Thyroid gland (tissue), 4 donors: ENCODE measurements at regions of chr21 and their contacts with region 1.

Region 1: GRCh38 chr21:26715878-26716506 is 129.2 kb downstream of the ADAMTS1 start:
- DNase-seq: peak; percentile 11 to 31
- H3K4me3 ChIP-seq: no peak overlapping the region
- H3K27ac ChIP-seq: no peak overlapping the region
- H3K4me1 ChIP-seq: no peaks in the 10 kb centered on the region
- H3K27me3 ChIP-seq: no peaks in the 10 kb centered on the region
- CTCF ChIP-seq: peak in 3 of 6 experiments; percentile 15 to 70 (median 41)
- POLR2A ChIP-seq: no peak

Region 2: DNA sequence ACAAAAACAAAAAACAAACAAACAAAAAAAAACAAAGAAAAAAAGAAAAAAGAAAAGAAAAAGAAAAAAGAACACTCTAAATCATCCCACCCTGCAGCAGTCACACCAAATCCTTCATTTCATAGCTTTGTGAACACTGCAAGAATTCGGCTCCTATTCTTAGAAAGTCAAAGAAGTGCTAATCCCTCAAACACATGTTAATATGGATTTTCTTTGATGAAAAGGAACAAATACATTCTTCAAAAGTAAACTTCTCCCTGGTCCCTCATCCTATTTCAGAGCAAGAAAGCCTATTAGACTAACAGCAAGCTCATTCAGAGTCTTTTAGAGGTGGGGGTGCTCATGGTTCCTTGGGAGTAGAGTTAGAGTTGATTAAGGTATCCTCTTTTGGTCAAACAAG is 1101.6 kb before region 1 on chr21:
- intact Hi-C with region 1: loop called (anchors 5 kb)
- DNase-seq: no peak
- H3K4me3 ChIP-seq: no peak overlapping the region
- H3K27ac ChIP-seq: no peak overlapping the region
- H3K4me1 ChIP-seq: no peaks in the 10 kb centered on the region
- H3K27me3 ChIP-seq: no peaks in the 10 kb centered on the region
- CTCF ChIP-seq: no peak
- POLR2A ChIP-seq: no peak

Region 3: GRCh38 chr21:25881525-25882376 is 834.2 kb before region 1 on chr21:
- intact Hi-C with region 1: loop called (anchors 10 kb)
- DNase-seq: peak; percentile 56 to 65
- H3K4me3 ChIP-seq: no peak overlapping the region
- H3K27ac ChIP-seq: no peak overlapping the region
- H3K4me1 ChIP-seq: peaks cover 0 to 5% of the 10 kb centered on the region in 2 donors
- H3K27me3 ChIP-seq: no peaks in the 10 kb centered on the region
- CTCF ChIP-seq: peak; percentile 80 to 94 (median 83)
- POLR2A ChIP-seq: no peak